K562 (cell line): ENCODE measurements at regions of chr6 and their contacts with region 1.

Region 1: DNA sequence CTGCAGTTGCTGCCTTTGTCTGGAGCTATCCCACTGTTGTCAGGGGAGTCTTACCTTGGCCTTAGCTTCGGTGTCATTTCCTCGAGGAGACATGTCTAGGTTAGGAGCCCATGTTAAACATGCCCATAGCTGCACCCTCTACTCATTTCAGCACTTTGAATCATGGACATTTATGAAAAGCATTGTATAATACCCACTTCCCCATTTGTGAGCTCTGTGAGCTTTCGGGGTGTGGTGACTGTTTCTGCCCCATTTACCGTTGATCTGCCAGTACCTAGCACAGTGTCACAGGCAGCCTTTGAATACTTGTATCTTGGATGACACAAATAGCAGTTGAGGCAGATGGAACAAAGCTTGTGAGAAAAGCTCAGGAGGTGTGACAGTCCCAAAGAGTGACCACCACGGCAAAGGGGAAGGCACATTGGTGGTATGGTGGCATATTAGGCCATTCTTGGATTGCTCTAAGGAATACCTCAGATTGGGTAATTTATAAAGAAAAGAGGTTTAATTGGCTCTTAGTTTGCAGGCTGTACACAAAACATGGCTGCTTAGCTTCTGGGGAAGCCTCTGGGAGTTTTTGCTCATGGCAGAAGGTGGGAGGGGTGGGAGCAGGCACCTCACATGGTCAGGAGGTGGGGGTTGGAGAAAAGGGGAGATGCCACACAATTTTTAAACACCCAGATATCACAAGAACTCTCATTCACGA is 42.0 kb downstream of the JARID2 start:
- DNase-seq: no peak
- ATAC-seq: peak; percentile 14
- H3K4me3 ChIP-seq: no peak overlapping the region
- H3K27ac ChIP-seq: no peak overlapping the region
- H3K4me1 ChIP-seq: peaks cover 15 to 25% of the 10 kb centered on the region in 2 experiments; a peak in 4 of 5 replicates
- H3K27me3 ChIP-seq: no peaks in the 10 kb centered on the region
- CTCF ChIP-seq: no peak
- EP300 ChIP-seq: no peak
- POLR2A ChIP-seq: no peak
- RAD21 ChIP-seq: no peak

Region 2: DNA sequence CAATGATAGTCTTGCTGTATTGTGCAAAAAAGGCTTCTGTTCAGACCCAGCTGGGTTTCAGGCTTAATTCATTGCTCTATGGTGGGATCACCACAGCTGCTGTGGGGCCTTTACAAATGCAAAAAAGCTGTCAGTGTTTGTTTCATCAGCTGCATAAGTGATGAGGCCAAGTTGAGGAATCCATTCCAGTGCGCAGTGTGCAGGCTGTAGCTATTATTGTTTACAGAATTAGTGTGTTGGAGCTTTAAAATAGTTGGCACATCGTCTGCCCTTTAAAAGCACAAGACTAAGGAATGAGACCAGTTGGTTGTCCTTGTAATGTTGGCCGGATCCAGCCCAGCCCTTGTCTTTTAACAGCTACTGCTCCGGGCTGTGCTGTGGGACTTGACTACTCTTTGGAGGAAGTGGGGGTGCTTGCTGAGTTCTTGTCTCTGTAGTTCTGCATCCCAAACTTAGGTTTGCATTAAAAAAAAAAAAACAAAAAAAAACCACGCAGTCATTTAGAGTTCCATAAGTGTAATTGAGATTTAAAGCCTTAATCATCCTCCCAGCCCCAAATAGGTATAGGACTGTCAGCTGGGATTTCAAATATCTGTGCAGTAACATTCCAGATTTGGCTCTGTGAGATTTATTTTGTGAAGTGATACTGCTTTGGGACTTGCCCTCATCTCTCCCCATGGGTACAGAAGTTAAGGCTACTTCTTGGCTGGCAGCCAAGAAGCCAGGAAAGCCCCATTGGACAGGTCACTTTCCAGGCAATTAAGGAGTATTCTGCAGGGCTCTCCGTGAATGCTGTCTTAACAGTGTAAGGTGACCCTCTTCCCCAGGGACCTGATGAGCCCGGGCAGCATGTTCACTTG is 22.7 kb before region 1 on chr6:
- CTCF ChIA-PET with region 1: no interaction called
- POLR2A ChIA-PET with region 1: interaction called, 13 read pairs
- in situ Hi-C with region 1: no loop called
- intact Hi-C with region 1: no loop called
- DNase-seq: peak; percentile 51 to 63 (median 56)
- ATAC-seq: peak; percentile 31
- H3K4me3 ChIP-seq: no peak overlapping the region
- H3K27ac ChIP-seq: peak overlapping the region; percentile 56; the same call in 1 of the 3 replicates
- H3K4me1 ChIP-seq: peaks cover 39 to 70% of the 10 kb centered on the region in 2 experiments
- H3K27me3 ChIP-seq: no peaks in the 10 kb centered on the region
- CTCF ChIP-seq: no peak
- EP300 ChIP-seq: no peak
- POLR2A ChIP-seq: no peak
- RAD21 ChIP-seq: 0 out of 4 replicates have a peak, but pooled peaks of 1 of the 2 experiments have one; percentile 4

Region 3: GRCh38 chr6:15299430-15300131 is 11.8 kb after region 1 on chr6:
- CTCF ChIA-PET with region 1: no interaction called
- POLR2A ChIA-PET with region 1: interaction called, 34 read pairs
- in situ Hi-C with region 1: no loop called
- intact Hi-C with region 1: no loop called
- DNase-seq: peak; percentile 91 to 98 (median 94)
- ATAC-seq: peak; percentile 86
- H3K4me3 ChIP-seq: peak overlapping the region; percentile 0; the same call in 1 of the 2 replicates
- H3K27ac ChIP-seq: peak overlapping the region; percentile 89
- H3K4me1 ChIP-seq: peaks cover 37 to 77% of the 10 kb centered on the region in 2 experiments
- H3K27me3 ChIP-seq: no peaks in the 10 kb centered on the region
- CTCF ChIP-seq: peak in 1 of 3 experiments; percentile 18; a peak in 1 of 6 replicates
- EP300 ChIP-seq: peak; percentile 98
- POLR2A ChIP-seq: peak; percentile 69
- RAD21 ChIP-seq: peak in 1 of 2 experiments; percentile 35; a peak in 2 of 4 replicates

Region 4: DNA sequence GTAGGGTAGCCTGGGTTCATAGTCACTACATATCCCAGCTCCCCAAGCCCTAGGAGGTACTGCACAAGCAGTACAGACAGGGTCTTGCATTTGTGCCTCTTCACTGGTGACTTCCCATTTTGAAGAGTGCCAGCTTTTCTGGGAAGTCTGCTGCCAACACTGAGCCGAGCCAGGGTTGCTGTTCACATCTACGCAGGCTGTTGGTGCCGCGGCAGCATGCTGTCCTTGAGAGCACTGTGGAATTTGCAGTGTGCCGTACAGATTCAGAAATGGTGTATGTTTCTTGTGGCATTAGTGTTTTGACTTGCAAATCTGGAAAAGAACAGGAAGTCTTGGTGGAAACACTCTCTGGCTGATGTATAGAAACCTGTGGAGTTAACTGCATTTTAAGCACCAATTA is 25.5 kb after region 1 on chr6:
- CTCF ChIA-PET with region 1: no interaction called
- POLR2A ChIA-PET with region 1: no interaction called
- in situ Hi-C with region 1: no loop called
- intact Hi-C with region 1: no loop called
- DNase-seq: no peak
- ATAC-seq: peak; percentile 15
- H3K4me3 ChIP-seq: no peak overlapping the region
- H3K27ac ChIP-seq: no peak overlapping the region
- H3K4me1 ChIP-seq: peaks cover 9 to 17% of the 10 kb centered on the region in 2 experiments; a peak in 4 of 5 replicates
- H3K27me3 ChIP-seq: no peaks in the 10 kb centered on the region
- CTCF ChIP-seq: no peak
- EP300 ChIP-seq: no peak
- POLR2A ChIP-seq: no peak
- RAD21 ChIP-seq: no peak